Aorta (tissue), 5 donors: ENCODE measurements at regions of chr6 and their contacts with region 1.

Region 1: DNA sequence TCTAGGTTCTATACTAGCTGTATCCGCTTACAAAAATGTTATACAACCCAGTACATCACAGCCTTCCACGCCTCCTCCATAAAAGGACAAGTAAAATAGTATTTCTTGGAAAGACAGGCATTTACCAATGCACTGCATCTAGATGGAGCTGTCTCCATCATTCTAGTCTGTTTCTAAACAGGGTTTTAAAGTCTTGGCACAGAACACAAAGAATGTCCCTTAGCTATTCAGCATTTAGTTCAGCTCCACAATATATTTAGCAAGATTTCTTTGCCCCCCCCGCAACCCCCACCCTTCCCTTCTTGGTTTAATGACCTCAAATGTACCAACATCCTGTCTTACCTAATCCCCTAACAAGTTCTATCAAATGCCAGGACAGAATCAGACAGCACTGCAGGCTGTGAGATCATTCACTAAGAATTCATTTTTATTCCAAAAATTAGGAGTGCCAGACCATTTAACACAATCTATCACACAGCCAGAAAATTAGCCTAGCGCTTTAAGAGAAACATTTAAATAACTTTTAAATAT is 198.6 kb downstream of the BACH2 start:
- DNase-seq: peak; percentile 76 to 86
- ATAC-seq: peak; percentile 92
- H3K4me3 ChIP-seq: no peak overlapping the region
- H3K27ac ChIP-seq: peak overlapping the region in 1 of 2 donors; percentile 86
- H3K4me1 ChIP-seq: peaks cover 6 to 13% of the 10 kb centered on the region in 2 donors
- H3K27me3 ChIP-seq: no peaks in the 10 kb centered on the region

Region 2: GRCh38 chr6:89999154-89999553 is 98.9 kb before region 1 on chr6:
- intact Hi-C with region 1: loop called (anchors 5 kb)
- DNase-seq: no peak
- ATAC-seq: no peak
- H3K4me3 ChIP-seq: no peak overlapping the region
- H3K27ac ChIP-seq: peak overlapping the region in 1 of 2 donors; percentile 25
- H3K4me1 ChIP-seq: peaks cover 2 to 14% of the 10 kb centered on the region in 2 donors
- H3K27me3 ChIP-seq: no peaks in the 10 kb centered on the region

Region 3: GRCh38 chr6:90216072-90216977 is 118.3 kb after region 1 on chr6:
- intact Hi-C with region 1: loop called (anchors 1 to 2 kb)
- DNase-seq: peak in 1 of 2 donors; percentile 49
- ATAC-seq: no peak
- H3K4me3 ChIP-seq: no peak overlapping the region
- H3K27ac ChIP-seq: peak overlapping the region in 1 of 2 donors; percentile 65
- H3K4me1 ChIP-seq: no peaks in the 10 kb centered on the region
- H3K27me3 ChIP-seq: no peaks in the 10 kb centered on the region

Region 4: DNA sequence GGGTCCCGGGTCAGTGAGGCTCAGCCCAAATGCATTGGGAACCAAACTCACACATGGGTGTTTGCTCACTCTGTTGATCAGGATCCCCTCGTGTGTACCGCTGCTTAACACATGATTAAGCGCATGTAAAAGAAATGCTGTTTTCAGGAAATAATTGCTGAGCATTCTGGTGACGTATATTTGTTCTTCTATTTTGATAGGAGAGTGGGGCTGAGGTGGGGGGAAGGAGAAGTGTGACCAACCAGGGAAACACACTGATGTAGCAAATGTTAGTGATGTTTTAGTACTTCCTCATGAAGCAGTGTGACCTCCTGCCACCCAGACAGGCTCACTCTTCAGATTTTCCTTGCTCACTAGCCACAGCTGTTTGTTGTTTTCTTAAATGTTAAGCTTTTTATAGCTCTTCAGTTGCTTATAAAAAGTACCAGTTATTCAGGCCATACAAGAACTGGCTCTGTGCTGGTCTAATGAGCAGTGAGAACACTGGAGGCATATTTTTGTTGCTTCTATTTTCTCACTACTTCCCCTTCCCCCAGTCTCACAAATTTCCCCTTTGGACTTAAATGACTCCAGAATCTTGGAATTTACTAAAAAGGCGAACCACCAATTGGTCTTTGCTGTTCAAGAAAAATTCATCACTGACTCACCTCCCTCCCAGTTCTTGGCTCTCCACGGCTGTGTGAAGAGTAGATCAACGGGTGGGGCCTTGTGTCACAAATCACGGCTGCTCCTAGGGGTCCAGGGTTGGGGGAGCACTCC is 277.8 kb after region 1 on chr6:
- intact Hi-C with region 1: loop called in 1 of 2 experiments (anchors 5 kb)
- DNase-seq: no peak
- ATAC-seq: peak; percentile 69
- H3K4me3 ChIP-seq: no peak overlapping the region
- H3K27ac ChIP-seq: peak overlapping the region; percentile 64 to 70
- H3K4me1 ChIP-seq: no peaks in the 10 kb centered on the region
- H3K27me3 ChIP-seq: no peaks in the 10 kb centered on the region

Region 5: DNA sequence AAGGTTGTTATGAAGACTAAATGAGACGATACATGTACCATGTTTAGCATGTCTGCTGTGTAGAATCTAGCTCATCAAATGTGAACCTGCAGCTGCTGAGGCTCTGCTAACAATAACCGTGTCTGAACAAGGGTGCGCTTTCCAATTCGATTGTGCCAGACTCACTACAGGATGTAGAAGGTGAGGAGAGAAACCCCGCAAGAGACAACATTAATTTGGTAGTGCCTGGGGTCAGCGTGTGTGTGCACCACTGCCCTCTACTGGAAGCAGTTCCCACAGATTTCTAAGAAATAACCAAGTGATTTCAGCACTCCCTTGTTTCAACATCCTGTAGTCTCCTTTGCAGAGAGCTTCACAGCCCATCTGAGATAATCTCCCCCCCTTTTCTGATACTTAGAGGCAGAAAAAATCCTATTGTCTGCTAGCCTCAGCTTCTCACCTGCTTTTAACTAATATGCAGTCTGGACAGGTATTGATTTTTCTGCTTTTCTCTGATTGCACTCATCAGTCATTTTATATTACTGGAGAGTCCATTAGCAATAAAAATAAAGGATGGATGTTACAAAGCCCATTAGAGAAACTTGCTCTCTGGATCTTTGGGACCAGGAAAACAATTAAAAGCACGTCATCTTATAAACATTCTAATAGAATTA is 295.3 kb after region 1 on chr6:
- intact Hi-C with region 1: loop called (anchors 5 kb)
- DNase-seq: no peak
- ATAC-seq: peak; percentile 72
- H3K4me3 ChIP-seq: no peak overlapping the region
- H3K27ac ChIP-seq: no peak overlapping the region
- H3K4me1 ChIP-seq: peaks cover 0 to 2% of the 10 kb centered on the region in 2 donors
- H3K27me3 ChIP-seq: no peaks in the 10 kb centered on the region